ENCODE measurements at regions of chr1 and their contacts with region 1.

Region 1: GRCh38 chr1:12454406-12455391 is 163.3 kb downstream of the DHRS3 start:
- DNase-seq: no peak
- ATAC-seq: no peak
- H3K4me3 Mint-ChIP-seq: peak overlapping the region; percentile 40
- H3K27ac Mint-ChIP-seq: peak overlapping the region; percentile 98
- H3K4me1 Mint-ChIP-seq: peaks cover 82% of the 10 kb centered on the region
- H3K27me3 Mint-ChIP-seq: no peaks in the 10 kb centered on the region

Region 2: DNA sequence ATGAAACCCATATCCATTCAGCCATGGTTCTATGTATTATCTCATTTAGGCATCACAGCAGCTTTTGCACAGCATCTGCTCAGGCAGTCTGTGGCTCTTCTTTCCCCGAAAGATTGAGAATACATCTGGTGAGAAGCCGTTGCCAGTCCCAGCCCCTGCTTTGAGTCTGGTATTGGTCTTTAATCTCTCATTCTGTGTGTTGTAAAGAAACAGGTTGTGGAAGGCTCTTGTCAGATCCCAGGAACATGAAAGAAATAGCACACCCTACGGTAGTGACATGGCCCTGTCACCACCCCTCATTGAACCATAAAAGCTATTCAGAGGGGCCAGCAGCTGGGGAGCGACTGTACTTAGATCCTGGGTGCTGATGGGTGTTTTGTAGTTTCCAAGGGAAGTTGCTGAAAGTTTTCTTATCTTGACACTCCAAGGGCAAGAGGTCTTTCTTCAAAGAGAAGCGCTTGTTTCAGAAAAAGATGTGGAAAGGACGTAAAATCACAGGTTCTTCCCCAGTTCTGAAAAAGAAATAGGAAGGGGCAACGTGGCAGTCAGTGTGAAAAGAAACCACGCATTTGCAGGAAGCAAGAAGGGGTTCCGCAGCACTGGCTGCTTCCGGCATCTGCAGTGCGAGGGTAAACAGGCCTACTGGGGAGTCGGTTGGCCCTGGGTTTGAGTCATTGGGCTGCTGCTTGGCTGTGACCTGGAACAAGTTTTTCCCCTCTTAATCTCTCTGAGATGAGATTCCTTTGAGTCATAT is 18.3 kb after region 1 on chr1:
- POLR2A ChIA-PET with region 1: interaction called, 36 read pairs
- DNase-seq: peak; percentile 67
- ATAC-seq: peak; percentile 78
- H3K4me3 Mint-ChIP-seq: peak overlapping the region; percentile 68
- H3K27ac Mint-ChIP-seq: peak overlapping the region; percentile 94
- H3K4me1 Mint-ChIP-seq: peaks cover 81% of the 10 kb centered on the region
- H3K27me3 Mint-ChIP-seq: no peaks in the 10 kb centered on the region

Measured in activated naive CD8-positive, alpha-beta T cell treated with anti-CD3 and anti-CD28 coated beads, Interleukin-2, amount 10 ng/mL, durations not matched to agents 7 days and 5 days (primary cell).